ENCODE measurements at regions of chr5 and their contacts with region 1.

Region 1: DNA sequence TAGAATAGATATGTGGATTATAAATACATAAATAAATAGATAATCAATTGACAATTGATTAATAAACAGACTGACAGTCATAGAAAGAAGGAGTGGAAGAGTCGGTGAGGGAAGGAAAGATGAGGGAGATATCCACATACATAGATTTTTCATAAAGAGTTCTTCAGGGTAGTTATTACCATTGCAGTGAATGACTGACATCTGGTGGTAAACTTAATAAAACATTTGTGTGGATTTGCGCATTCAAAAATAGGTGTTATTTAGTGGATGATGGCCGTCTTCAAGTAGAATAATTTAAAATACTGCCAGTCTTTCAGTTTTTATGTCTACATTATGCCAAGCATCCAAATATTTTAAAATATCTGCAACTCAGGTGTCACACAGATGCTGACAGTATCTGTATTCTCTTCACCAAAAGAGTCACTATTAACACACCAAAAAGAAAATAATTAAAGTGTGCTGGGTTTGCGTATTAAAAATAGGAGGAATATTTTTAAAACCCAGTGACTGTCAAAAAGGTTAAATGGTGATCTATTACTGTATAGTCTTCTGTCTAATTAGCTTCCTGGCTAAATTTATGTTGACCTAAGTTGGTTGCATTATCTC is 78.8 kb downstream of the GIN1 start:
- DNase-seq: no peak
- ATAC-seq: no peak

Region 2: DNA sequence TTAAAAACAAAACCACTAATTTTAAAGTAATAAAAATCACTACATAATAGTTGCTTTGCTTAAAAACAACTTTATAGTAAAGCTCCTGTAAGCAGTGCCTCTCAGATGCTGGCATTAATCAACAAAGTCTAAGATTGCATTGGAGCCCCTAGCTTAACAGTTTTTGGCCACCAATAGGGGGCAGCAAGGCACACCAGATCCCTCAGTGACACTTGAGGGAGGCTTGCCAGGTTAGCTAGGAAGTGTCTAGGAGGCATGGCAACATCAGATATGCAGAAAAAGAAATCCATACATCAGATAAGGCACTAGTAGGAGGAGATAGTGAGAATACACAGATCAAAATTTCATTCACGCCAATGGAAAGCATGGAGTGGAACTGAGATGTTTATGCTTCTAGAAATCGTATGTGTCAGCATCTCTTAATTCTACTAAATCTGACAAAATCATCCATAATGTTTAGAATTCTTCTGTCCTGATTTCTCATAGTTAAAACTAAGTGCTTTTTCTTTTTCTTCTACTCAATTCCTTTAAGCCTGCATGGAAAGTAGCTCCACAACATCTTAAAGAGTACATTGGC is 359.7 kb before region 1 on chr5:
- intact Hi-C with region 1: loop called in 1 of 2 experiments (anchors 5 kb)
- DNase-seq: peak; percentile 77
- ATAC-seq: peak; percentile 73 to 89

Region 3: DNA sequence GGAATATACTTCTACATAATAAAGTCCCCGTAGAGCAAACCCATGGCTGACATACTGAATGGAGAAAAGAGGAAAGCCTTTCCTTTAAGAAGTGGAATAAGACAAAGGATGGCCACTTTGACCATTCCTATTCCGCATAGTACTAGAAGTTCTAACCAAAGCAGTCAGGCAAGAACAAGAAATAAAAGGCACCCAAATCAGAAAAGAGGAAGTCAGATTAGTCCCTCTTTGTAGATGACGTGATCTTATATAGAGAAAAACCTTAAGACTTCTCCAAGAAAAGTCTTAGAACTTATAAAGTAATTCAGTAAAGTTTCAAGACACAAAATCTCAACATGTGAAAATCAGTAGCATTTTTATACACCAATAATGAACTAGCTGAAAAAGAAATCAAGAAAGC is 55.1 kb before region 1 on chr5:
- intact Hi-C with region 1: no loop called
- DNase-seq: no peak
- ATAC-seq: no peak

Region 4: GRCh38 chr5:103075442-103075841 is 34.3 kb after region 1 on chr5:
- intact Hi-C with region 1: no loop called
- DNase-seq: no peak
- ATAC-seq: no peak

Region 5: GRCh38 chr5:103139264-103139865 is 98.2 kb after region 1 on chr5:
- intact Hi-C with region 1: loop called in 1 of 2 experiments (anchors 5 kb)
- DNase-seq: peak; percentile 71
- ATAC-seq: peak; percentile 88 to 89